K562 (cell line): ENCODE measurements at regions of chr21 and their contacts with region 1.

Region 1: GRCh38 chr21:14753466-14754258 is 207.5 kb upstream of the SAMSN1 start:
- DNase-seq: peak; percentile 71 to 99 (median 81)
- ATAC-seq: peak; percentile 69
- H3K4me3 ChIP-seq: peak overlapping the region; percentile 46
- H3K27ac ChIP-seq: peak overlapping the region; percentile 92
- H3K4me1 ChIP-seq: peaks cover 2 to 36% of the 10 kb centered on the region in 2 experiments; a peak in 3 of 5 replicates
- H3K27me3 ChIP-seq: no peaks in the 10 kb centered on the region
- CTCF ChIP-seq: no peak
- EP300 ChIP-seq: peak; percentile 99
- POLR2A ChIP-seq: peak; percentile 81; the same call in 1 of the 2 replicates
- RAD21 ChIP-seq: peak in 1 of 2 experiments; percentile 42; a peak in 2 of 4 replicates

Region 2: DNA sequence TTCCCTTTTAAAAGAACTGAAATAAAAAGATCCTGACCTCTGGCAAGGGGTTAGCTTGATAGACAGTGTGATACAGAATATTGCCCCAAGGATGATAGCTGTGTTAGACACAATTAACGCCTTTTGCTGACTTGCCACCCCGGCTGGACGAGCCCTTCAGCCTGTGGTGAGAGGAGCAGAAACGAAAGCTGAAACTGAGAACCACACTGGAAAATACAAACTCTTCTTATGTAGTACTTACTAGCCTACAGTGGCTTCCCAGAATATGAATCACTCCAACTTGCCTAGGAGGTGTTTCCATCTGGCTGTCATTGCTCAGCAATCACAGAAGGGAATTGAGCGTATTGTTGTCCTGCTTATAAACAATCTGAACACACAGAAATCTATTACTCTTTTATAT is 230.4 kb before region 1 on chr21:
- CTCF ChIA-PET with region 1: no interaction called
- POLR2A ChIA-PET with region 1: no interaction called
- in situ Hi-C with region 1: no loop called
- intact Hi-C with region 1: loop called (anchors 5 kb)
- DNase-seq: peak in 1 of 4 experiments; percentile 28
- ATAC-seq: no peak
- H3K4me3 ChIP-seq: no peak overlapping the region
- H3K27ac ChIP-seq: no peak overlapping the region
- H3K4me1 ChIP-seq: peaks cover 4 to 16% of the 10 kb centered on the region in 2 experiments; a peak in 4 of 5 replicates
- H3K27me3 ChIP-seq: no peaks in the 10 kb centered on the region
- CTCF ChIP-seq: no peak
- EP300 ChIP-seq: no peak
- POLR2A ChIP-seq: no peak
- RAD21 ChIP-seq: no peak

Region 3: GRCh38 chr21:14581902-14582457 is 171.7 kb before region 1 on chr21:
- CTCF ChIA-PET with region 1: no interaction called
- POLR2A ChIA-PET with region 1: no interaction called
- in situ Hi-C with region 1: no loop called
- intact Hi-C with region 1: loop called (anchors 5 kb)
- DNase-seq: peak in 2 of 4 experiments; percentile 36 to 80
- ATAC-seq: peak; percentile 66
- H3K4me3 ChIP-seq: peak overlapping the region; percentile 19
- H3K27ac ChIP-seq: peak overlapping the region; percentile 91
- H3K4me1 ChIP-seq: peaks cover 0 to 25% of the 10 kb centered on the region in 2 experiments; a peak in 3 of 5 replicates
- H3K27me3 ChIP-seq: no peaks in the 10 kb centered on the region
- CTCF ChIP-seq: no peak
- EP300 ChIP-seq: peak; percentile 95
- POLR2A ChIP-seq: peak; percentile 55
- RAD21 ChIP-seq: no peak; a peak in 1 of 4 replicates

Region 4: GRCh38 chr21:14675774-14676530 is 77.7 kb before region 1 on chr21:
- CTCF ChIA-PET with region 1: no interaction called
- POLR2A ChIA-PET with region 1: no interaction called
- in situ Hi-C with region 1: loop called (anchors 5 kb)
- intact Hi-C with region 1: loop called (anchors 5 kb)
- DNase-seq: peak in 1 of 4 experiments; percentile 67
- ATAC-seq: peak; percentile 51
- H3K4me3 ChIP-seq: no peak overlapping the region
- H3K27ac ChIP-seq: peak overlapping the region; percentile 86
- H3K4me1 ChIP-seq: peaks cover 8 to 54% of the 10 kb centered on the region in 2 experiments
- H3K27me3 ChIP-seq: no peaks in the 10 kb centered on the region
- CTCF ChIP-seq: no peak
- EP300 ChIP-seq: peak; percentile 59
- POLR2A ChIP-seq: no peak
- RAD21 ChIP-seq: no peak

Region 5: GRCh38 chr21:15172992-15173626 is 419.4 kb after region 1 on chr21:
- CTCF ChIA-PET with region 1: no interaction called
- POLR2A ChIA-PET with region 1: no interaction called
- in situ Hi-C with region 1: no loop called
- intact Hi-C with region 1: no loop called
- DNase-seq: no peak
- ATAC-seq: no peak
- H3K4me3 ChIP-seq: no peak overlapping the region
- H3K27ac ChIP-seq: no peak overlapping the region
- H3K4me1 ChIP-seq: no peaks in the 10 kb centered on the region
- H3K27me3 ChIP-seq: no peaks in the 10 kb centered on the region
- CTCF ChIP-seq: no peak
- EP300 ChIP-seq: no peak
- POLR2A ChIP-seq: no peak
- RAD21 ChIP-seq: no peak

Region 6: DNA sequence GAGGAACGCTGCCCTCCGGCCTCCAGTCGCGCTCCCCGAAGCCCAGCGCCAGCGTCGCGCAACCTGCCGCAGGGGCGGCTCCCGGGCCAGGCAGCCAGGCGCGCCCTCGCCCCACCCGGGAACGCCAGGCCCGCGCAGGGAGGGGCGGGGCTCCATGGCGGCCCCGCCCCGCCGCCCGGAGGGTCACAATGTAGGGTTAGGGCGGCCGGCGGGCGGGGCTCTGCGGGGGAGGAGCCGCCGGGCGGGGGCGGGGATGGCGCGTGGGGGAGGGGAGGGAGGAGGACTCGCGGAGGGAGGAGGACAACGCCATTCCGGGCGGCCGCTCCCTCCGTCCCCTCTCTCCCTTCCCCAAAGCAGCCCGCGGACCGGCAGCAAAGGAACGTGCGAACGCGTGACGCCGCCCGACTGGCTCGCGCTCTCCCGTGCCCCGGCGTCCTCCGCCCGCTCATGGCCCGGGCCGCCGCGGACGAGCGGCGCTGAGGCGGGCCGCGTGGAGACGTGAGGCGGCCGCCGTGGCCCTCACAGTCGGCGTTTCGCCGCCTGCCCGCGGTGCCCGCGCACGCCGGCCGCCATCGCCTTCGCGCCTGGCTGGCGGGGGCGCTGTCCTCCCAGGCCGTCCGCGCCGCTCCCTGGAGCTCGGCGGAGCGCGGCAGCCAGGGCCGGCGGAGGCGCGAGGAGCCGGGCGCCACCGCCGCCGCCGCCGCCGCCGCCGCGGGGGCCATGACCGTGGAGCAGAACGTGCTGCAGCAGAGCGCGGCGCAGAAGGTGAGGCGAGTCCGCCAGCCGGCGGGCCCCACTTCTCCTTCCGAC is 976.2 kb after region 1 on chr21 and contains the start of gene USP25:
- CTCF ChIA-PET with region 1: no interaction called
- POLR2A ChIA-PET with region 1: no interaction called
- in situ Hi-C with region 1: no loop called
- intact Hi-C with region 1: loop called (anchors 10 kb)
- DNase-seq: peak; percentile 91 to 97 (median 97)
- ATAC-seq: peak; percentile 88
- H3K4me3 ChIP-seq: peak within 1 kb of the TSS; percentile 72
- H3K27ac ChIP-seq: peak within 1 kb of the TSS; percentile 90
- H3K4me1 ChIP-seq: peaks cover 4 to 6% of the 10 kb centered on the region in 2 experiments; a peak in 2 of 5 replicates
- H3K27me3 ChIP-seq: no peaks in the 10 kb centered on the region
- CTCF ChIP-seq: peak in 2 of 3 experiments; percentile 33; a peak in 3 of 6 replicates
- EP300 ChIP-seq: no peak
- POLR2A ChIP-seq: peak; percentile 63; the same call in 1 of the 2 replicates
- RAD21 ChIP-seq: peak in 1 of 2 experiments; percentile 50; a peak in 3 of 4 replicates
- polyA plus RNA-seq, gene USP25: 7.8 to 8.0 TPM